Activated CD4-positive, alpha-beta memory T cell treated with anti-CD3 and anti-CD28 coated beads, Interleukin-2, amount 10 ng/mL, durations not matched to agents 7 days and 5 days (primary cell): ENCODE measurements at regions of chr6 and their contacts with region 1.

Region 1: DNA sequence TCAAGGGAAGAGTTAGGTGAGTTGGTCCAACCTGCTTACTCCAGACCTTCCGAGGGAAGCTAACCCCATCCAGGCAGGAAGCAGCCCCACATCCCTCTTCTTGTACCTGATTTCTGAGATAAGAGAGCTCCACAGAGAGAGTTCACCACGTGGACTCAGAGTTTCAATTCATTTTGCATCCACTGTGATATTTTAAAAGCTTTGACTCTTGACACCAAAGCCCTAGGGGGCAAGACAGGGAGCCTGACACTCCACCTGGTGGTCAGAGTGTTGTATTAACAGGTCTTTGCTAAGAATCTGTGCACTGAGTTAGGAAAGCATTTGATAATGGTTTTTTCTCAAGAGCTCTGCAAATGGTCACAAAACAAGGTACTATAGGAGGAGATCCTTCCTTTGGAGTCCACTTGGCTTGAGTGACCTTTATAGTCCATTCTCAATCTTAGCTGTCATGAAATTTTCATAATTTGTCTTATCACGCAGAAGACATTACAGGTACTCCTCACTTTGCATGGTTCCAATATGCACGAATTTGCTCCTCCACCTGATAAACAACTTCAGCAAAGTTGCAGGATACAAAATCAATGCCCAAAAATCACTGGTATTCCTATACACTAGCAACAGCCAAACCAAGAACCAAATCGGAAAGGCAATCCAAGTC is 56.2 kb upstream of the RIPOR2 start:
- DNase-seq: peak; percentile 81
- H3K4me3 Mint-ChIP-seq: no peak overlapping the region
- H3K27ac Mint-ChIP-seq: peak overlapping the region; percentile 67
- H3K4me1 Mint-ChIP-seq: peaks cover 44% of the 10 kb centered on the region
- H3K27me3 Mint-ChIP-seq: no peaks in the 10 kb centered on the region

Region 2: GRCh38 chr6:24847402-24847801 is 144.5 kb before region 1 on chr6:
- CTCF ChIA-PET with region 1: no interaction called
- POLR2A ChIA-PET with region 1: no interaction called
- DNase-seq: no peak
- H3K4me3 Mint-ChIP-seq: no peak overlapping the region
- H3K27ac Mint-ChIP-seq: no peak overlapping the region
- H3K4me1 Mint-ChIP-seq: peaks cover 17% of the 10 kb centered on the region
- H3K27me3 Mint-ChIP-seq: no peaks in the 10 kb centered on the region

Region 3: DNA sequence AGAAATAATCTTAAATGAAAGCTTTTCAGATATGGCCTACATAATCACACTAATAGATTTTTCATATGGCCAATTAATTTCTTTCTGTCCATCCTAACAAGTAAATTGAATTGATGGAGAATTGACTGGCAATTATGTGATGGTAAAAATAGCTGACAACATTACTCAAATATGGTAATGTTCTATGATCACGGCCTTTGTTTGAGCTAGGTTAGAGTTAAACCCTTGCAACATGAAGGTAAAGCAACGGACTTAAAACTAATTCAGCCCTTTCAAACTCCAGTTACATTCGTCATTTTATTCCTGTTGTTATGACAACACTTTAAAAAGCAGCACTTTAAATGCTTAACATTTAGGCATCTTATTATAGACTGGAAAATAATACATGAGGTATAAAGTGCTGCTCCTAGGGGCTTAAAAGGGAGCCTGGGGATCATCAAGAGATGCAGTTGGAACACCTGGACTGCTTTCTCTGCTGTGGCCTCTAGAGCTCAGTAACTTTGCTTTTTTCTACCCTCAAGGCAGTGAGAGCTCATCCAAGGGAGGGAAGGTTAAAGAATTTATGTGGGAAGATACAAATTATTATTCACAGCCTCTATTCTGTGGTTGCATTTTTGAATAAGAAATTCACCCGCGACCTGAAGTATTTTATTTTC is 103.1 kb before region 1 on chr6:
- CTCF ChIA-PET with region 1: interaction called, 13 read pairs
- POLR2A ChIA-PET with region 1: no interaction called
- DNase-seq: no peak
- H3K4me3 Mint-ChIP-seq: no peak overlapping the region
- H3K27ac Mint-ChIP-seq: no peak overlapping the region
- H3K4me1 Mint-ChIP-seq: peaks cover 66% of the 10 kb centered on the region
- H3K27me3 Mint-ChIP-seq: no peaks in the 10 kb centered on the region

Region 4: DNA sequence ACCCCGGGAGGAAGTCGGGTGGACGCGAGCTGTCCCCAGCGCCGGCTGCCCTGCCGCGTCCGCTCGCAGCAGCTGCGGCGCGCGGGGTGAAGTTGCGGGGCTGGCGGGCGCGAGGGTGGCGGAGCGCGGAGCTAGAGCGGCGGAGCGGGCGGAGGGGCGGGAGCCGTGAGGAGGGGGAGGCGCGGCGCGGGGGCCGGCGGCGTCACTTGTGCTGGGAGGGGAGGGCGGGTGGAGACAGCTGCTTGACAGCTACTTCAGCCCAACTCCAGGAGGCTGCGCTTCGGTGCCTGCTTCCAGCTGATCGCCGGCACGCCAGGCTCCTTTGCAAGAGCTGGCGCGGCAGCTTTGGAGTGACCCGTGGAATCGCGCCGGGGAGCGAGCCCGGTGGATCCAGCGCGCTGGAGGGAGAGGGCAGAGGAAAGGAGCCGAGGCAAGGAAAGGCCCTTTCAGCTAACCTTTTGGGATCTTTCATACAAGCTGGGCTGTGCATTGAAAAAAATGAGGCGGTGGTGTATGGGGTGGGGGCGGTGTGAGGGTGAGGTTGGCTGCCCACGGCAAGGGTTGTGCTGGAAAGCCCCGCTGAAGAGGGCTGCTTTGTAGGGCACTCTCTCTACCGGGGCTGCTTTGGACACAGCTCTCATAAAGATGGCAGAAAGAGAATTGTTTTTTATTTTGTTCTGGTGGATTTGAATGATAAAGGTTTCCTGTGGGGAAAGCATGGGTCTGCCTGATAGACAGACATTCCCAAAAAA is 80.8 kb before region 1 on chr6:
- CTCF ChIA-PET with region 1: interaction called, 73 read pairs
- POLR2A ChIA-PET with region 1: interaction called, 47 read pairs
- DNase-seq: peak; percentile 46
- H3K4me3 Mint-ChIP-seq: peak overlapping the region; percentile 76
- H3K27ac Mint-ChIP-seq: peak overlapping the region; percentile 79
- H3K4me1 Mint-ChIP-seq: peaks cover 90% of the 10 kb centered on the region
- H3K27me3 Mint-ChIP-seq: no peaks in the 10 kb centered on the region

Region 5: GRCh38 chr6:24949020-24949569 is 42.8 kb before region 1 on chr6:
- CTCF ChIA-PET with region 1: interaction called, 69 read pairs
- POLR2A ChIA-PET with region 1: interaction called, 77 read pairs
- DNase-seq: peak; percentile 85
- H3K4me3 Mint-ChIP-seq: peak overlapping the region; percentile 40
- H3K27ac Mint-ChIP-seq: peak overlapping the region; percentile 95
- H3K4me1 Mint-ChIP-seq: peaks cover 74% of the 10 kb centered on the region
- H3K27me3 Mint-ChIP-seq: no peaks in the 10 kb centered on the region

Region 6: DNA sequence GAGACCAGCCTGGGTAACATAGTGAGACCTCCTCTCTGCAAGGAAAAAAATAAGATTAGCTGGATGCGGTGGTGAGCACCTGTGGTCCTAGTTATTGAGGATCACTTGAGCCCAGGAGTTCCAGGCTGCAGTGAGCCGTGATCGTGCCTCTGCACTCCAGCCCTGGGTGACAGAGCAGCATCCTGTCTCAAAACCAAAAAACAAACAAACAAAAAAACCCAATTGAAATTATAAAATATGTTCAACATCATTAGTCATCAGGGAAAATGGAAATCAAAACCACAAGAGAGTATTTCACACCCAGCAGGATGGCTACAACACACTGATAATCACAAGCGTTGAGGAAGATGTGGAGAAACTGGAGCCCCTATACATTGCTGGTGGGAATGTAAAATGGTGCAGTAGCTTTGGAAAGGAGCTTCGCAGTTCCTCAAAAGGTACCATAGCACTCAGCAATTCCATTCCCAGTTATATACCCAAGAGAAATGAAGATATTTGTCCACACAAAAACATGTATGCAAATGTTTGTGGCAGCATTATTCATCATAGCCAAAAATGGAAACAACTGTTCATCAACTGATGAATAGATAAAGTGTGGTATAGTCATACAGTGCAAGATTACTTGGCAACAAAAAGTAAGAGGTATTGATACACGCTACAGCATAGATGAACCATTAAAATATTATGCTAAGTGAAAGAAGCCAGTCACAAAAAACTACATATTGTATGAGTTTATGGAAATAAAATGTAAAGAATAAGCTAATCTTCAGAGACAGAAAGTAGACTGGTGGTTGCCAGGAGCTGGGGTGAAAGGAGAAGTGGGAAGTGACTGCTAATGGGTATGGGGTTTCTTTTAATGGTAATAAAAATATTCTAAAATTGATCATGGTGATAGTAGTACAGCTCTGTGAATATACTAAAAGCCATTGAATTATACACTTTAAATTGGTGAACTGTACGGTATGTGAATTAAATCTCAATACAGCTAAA is 17.5 kb before region 1 on chr6:
- CTCF ChIA-PET with region 1: interaction called, 22 read pairs
- POLR2A ChIA-PET with region 1: interaction called, 20 read pairs
- DNase-seq: peak; percentile 64
- H3K4me3 Mint-ChIP-seq: peak overlapping the region; percentile 32
- H3K27ac Mint-ChIP-seq: peak overlapping the region; percentile 85
- H3K4me1 Mint-ChIP-seq: peaks cover 37% of the 10 kb centered on the region
- H3K27me3 Mint-ChIP-seq: no peaks in the 10 kb centered on the region

Region 7: GRCh38 chr6:25017932-25018567 is 26.1 kb after region 1 on chr6:
- CTCF ChIA-PET with region 1: interaction called, 57 read pairs
- POLR2A ChIA-PET with region 1: interaction called, 8 read pairs
- DNase-seq: peak; percentile 88
- H3K4me3 Mint-ChIP-seq: no peak overlapping the region
- H3K27ac Mint-ChIP-seq: peak overlapping the region; percentile 46
- H3K4me1 Mint-ChIP-seq: peaks cover 45% of the 10 kb centered on the region
- H3K27me3 Mint-ChIP-seq: no peaks in the 10 kb centered on the region

Region 8: GRCh38 chr6:25297039-25297441 is 305.1 kb after region 1 on chr6:
- CTCF ChIA-PET with region 1: no interaction called
- POLR2A ChIA-PET with region 1: no interaction called
- DNase-seq: no peak
- H3K4me3 Mint-ChIP-seq: no peak overlapping the region
- H3K27ac Mint-ChIP-seq: no peak overlapping the region
- H3K4me1 Mint-ChIP-seq: no peaks in the 10 kb centered on the region
- H3K27me3 Mint-ChIP-seq: peaks cover 2% of the 10 kb centered on the region